Heart left ventricle (tissue), 16 donors: ENCODE measurements at regions of chr1 and their contacts with region 1.

Region 1: GRCh38 chr1:183023601-183024316 is 539 bp downstream of the LAMC1 start:
- DNase-seq: peak; percentile 60 to 80 (median 66)
- ATAC-seq: peak; percentile 14 to 60 (median 44)
- H3K4me3 ChIP-seq: peak overlapping the region; percentile 42 to 95 (median 84)
- H3K27ac ChIP-seq: peak overlapping the region; percentile 99 to 100 (median 100)
- H3K4me1 ChIP-seq: peaks cover 0 to 58% (median 37%) of the 10 kb centered on the region in 12 donors
- H3K27me3 ChIP-seq: peaks cover 0 to 4% (median 0%) of the 10 kb centered on the region in 9 donors
- CTCF ChIP-seq: peak; percentile 20 to 63 (median 48)
- POLR2A ChIP-seq: no peak

Region 2: GRCh38 chr1:183101841-183102276 is 78.1 kb after region 1 on chr1:
- intact Hi-C with region 1: loop called in 6 of 10 experiments (anchors 5 to 10 kb)
- DNase-seq: peak in 1 of 5 donors; percentile 44
- ATAC-seq: peak in 3 of 4 donors; percentile 40 to 52 (median 51)
- H3K4me3 ChIP-seq: peak overlapping the region in 1 of 12 donors; percentile 10
- H3K27ac ChIP-seq: peak overlapping the region in 3 of 12 donors; percentile 3 to 15 (median 4)
- H3K4me1 ChIP-seq: peaks cover 0 to 93% (median 68%) of the 10 kb centered on the region in 12 donors
- H3K27me3 ChIP-seq: no peaks in the 10 kb centered on the region
- CTCF ChIP-seq: no peak
- POLR2A ChIP-seq: no peak

Region 3: DNA sequence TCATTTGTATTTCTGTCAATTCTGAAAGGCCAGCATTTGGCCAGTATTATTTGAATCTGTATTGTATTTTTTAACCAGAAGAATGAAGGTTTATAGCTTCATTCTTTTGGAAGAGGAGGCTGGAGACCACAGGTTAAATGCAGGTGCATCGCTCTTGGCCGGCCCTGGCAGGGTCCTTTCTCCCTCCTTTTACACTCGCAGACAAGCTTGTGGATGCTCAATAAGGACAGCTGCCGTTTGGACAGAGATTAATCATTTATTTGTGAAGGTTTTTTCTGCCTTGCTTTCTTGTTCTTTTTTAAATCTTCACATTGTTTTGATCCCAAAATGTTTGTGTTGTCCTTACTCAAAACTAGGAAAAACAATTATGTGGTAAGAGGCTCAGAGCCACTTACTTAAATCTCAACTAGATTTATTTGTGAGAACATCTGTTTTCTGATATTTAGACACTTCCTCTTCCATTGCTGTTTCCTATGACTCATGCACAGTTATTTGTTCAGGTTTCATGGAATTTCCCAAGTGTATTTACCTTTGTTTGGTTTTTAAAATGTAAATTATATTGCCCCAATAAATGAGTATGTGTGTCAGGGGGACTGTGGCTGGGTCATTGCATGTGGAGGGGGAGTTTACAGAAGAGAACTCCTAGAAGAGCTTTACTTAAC is 115.7 kb after region 1 on chr1:
- intact Hi-C with region 1: loop called in 1 of 10 experiments (anchors 5 kb)
- DNase-seq: no peak
- ATAC-seq: peak in 2 of 4 donors; percentile 50 to 55
- H3K4me3 ChIP-seq: no peak overlapping the region
- H3K27ac ChIP-seq: peak overlapping the region; percentile 32 to 70 (median 38)
- H3K4me1 ChIP-seq: peaks cover 0 to 43% (median 19%) of the 10 kb centered on the region in 12 donors
- H3K27me3 ChIP-seq: no peaks in the 10 kb centered on the region
- CTCF ChIP-seq: no peak
- POLR2A ChIP-seq: no peak

Region 4: DNA sequence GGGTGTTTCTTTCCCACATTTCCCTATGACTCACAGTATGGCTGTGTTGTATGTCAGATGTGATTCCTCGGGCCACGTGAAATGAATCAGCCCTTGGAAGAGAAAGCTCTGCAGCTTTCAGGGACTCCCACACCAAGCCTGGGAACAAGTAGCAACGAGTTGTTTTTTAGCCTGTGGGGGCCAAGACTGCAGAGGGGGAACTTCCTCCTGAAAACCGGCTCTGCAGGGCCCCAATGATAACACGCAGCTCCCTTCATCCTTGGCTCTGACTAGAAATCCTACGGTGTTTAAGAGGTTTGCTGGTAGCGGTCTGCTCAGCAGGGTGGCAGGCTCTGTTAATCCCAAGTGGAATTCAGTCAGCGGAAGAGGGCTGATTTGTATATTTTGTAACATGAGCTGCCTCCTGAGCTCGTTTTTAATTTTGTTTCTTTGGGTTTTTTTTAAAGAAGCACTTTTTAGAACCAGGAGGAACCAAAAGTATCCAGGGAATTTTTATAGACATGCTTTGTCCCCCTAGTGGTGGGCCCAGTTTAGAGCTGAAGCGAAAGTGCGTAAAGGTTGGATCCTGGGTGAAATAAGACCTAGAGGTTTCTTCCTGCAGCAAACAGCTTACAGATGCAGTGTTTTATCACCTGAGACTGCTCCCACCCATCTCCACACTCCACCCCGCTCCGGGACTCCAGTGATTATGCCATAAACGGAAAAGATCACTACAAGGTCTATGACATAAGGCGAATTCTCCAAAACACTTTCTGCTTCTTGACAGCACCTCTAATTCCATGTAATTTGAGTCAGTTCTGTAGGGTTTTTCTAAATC is 211.1 kb after region 1 on chr1:
- intact Hi-C with region 1: loop called in 4 of 10 experiments (anchors 5 to 10 kb)
- DNase-seq: peak in 4 of 5 donors; percentile 68 to 76 (median 70)
- ATAC-seq: peak; percentile 70 to 92 (median 92)
- H3K4me3 ChIP-seq: peak overlapping the region in 10 of 12 donors; percentile 12 to 51 (median 32)
- H3K27ac ChIP-seq: peak overlapping the region; percentile 33 to 83 (median 72)
- H3K4me1 ChIP-seq: peaks cover 0 to 41% (median 10%) of the 10 kb centered on the region in 12 donors
- H3K27me3 ChIP-seq: no peaks in the 10 kb centered on the region
- CTCF ChIP-seq: peak in 11 of 12 donors; percentile 34 to 74 (median 59)
- POLR2A ChIP-seq: no peak

Region 5: DNA sequence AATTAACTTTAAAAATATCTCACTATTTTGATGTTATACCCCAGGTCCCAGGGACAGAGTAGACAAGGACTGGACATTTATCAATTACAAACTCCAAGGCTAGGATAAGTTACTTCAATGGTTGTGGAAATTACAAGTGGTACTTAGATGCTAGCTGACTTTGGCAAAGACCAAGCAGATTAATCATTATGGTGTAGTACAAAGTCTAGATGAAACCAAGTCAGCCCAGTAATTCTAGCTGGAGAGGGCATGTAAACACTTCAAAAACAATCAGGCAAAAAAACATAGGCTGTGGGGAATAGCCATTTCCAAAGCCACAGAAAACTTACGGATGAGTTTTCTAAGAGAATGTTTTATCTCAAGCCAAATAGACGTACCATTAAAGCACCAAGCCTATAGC is 1152.3 kb after region 1 on chr1:
- intact Hi-C with region 1: no loop called
- DNase-seq: no peak
- ATAC-seq: no peak
- H3K4me3 ChIP-seq: no peak overlapping the region
- H3K27ac ChIP-seq: no peak overlapping the region
- H3K4me1 ChIP-seq: no peaks in the 10 kb centered on the region
- H3K27me3 ChIP-seq: no peaks in the 10 kb centered on the region
- CTCF ChIP-seq: no peak
- POLR2A ChIP-seq: no peak